ENCODE measurements at regions of chr6 and their contacts with region 1.

Region 1: DNA sequence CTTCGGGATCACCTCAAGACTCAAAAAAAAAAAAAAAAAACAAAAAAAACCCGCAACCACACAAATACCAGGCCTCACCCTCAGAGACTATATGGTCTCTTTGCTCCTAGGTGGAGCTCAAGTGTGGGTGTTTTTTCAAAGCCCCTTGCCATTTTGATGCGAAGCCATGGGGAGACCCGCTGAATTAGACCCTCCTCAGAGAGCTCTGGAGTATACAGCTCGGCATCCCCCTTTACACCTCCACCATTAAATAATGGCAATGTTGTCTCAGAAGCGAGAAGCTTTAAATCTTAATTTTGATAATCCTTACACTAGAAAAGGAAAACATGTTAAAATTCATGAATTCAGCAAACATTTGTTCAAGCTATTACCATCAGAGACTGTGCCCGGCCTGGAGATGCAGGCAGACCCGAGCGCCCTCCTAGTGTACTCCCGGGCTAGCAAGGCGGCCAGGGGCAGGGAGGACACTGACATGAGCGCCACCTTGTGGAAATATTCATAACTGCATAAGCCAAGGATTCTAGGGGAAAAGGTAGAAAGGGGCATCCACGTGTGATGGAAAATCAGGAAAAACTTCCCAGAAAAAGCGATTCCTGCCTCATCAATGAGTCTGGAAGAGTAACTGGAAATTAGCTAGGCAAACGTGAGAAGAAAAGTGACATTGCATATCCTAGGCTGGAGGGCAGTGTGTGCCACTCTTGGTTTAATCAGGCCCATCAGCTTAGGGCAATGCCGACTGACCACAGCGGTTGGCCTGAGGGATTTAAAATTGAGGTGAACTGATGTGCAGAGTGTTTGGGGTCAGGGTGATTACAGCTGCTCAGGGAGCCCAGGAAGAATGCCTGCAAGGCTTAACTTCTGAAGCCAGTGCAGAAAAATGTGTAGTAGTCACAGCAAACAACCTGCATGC is 72.5 kb downstream of the B3GAT2 start:
- DNase-seq: peak; percentile 78
- CTCF ChIP-seq: peak; percentile 80

Region 2: DNA sequence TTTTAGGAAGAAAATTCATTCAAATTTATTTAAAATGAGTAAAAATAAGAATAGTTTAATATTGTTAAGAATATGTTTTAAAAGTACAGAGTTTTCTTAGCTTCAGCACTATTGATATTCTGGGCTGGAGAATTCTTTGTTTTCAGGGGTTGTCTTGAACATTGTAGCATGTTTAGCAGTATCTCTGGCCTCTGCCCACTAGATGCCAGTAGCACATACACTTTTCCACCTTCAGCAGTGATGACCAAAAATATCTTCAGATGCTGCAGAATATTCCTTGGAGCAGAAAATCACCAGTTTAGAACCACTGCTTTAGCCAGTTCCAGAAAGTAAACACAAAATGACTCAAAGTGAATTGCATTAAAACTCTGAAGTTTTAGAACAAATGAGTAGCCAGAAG is 337.0 kb before region 1 on chr6:
- in situ Hi-C with region 1: loop called (anchors 25 kb)
- DNase-seq: no peak
- CTCF ChIP-seq: peak; percentile 13

Region 3: DNA sequence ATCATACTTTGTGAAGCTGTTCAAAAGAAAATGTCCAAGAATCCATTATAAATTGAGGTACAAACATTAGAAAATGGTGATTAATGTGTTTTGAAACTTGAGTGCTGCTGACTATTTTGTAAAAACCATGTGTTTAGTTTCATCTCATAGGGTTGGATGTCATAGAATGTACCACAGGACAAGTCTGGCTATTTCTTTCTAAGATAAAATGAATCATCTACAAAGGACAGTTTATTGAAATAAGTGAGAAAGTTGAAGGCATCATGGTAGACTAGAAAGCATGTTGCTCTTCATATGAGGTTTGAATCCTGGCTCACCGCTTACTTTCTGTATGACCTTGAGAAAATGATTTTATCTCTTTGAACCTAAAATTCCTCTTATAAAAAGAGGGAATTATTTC is 245.9 kb before region 1 on chr6:
- in situ Hi-C with region 1: no loop called
- DNase-seq: no peak
- CTCF ChIP-seq: no peak

Region 4: GRCh38 chr6:70706491-70707123 is 177.7 kb before region 1 on chr6:
- in situ Hi-C with region 1: loop called (anchors 5 kb)
- DNase-seq: no peak
- CTCF ChIP-seq: no peak